ENCODE measurements at regions of chr15 and their contacts with region 1.

Region 1: DNA sequence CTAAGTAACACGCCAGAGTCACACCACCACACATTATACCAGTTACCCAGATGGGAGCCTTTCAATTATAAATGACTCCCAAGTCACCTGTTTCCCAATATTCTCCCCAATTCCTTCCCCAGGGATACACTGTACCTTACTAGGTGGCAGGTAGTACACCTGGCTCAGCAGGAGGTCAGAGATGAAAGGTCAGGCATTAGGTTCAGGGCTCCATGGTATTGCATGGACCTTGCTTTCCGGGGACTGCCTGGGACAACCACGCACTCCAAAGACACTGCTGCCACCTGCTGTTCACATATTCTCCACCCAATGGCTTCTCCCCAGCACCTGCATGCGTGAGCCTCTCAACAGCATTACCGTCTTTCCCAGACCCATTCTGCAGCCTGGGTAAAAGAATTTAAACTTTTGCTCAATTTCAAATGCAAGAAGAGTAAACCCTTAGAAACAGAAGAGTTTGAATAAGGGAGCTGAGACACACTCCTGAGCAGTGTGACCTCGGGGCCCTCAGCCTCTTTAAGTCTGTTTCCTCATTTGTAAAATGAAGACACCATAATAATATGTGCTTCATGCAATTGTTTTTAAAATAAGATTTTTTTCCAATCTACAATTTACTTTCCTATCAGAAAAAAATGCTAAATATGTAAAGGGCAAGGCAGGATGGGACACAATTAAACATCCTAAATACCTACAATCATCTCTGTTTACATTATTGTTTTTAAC is 28.0 kb upstream of the LACTB start:
- DNase-seq: peak; percentile 65 to 87
- H3K4me3 ChIP-seq: no peak overlapping the region
- H3K27ac ChIP-seq: no peak overlapping the region
- H3K4me1 ChIP-seq: peaks cover 4 to 9% (median 8%) of the 10 kb centered on the region in 4 experiments; a peak in 5 of 7 replicates
- H3K27me3 ChIP-seq: no peaks in the 10 kb centered on the region
- CTCF ChIP-seq: peak; percentile 87 to 95 (median 95)
- EP300 ChIP-seq: 0 out of 3 replicates have a peak, but pooled peaks of 1 of the 2 experiments have one; percentile 27
- POLR2A ChIP-seq: no peak
- RAD21 ChIP-seq: peak; percentile 98 to 99

Region 2: DNA sequence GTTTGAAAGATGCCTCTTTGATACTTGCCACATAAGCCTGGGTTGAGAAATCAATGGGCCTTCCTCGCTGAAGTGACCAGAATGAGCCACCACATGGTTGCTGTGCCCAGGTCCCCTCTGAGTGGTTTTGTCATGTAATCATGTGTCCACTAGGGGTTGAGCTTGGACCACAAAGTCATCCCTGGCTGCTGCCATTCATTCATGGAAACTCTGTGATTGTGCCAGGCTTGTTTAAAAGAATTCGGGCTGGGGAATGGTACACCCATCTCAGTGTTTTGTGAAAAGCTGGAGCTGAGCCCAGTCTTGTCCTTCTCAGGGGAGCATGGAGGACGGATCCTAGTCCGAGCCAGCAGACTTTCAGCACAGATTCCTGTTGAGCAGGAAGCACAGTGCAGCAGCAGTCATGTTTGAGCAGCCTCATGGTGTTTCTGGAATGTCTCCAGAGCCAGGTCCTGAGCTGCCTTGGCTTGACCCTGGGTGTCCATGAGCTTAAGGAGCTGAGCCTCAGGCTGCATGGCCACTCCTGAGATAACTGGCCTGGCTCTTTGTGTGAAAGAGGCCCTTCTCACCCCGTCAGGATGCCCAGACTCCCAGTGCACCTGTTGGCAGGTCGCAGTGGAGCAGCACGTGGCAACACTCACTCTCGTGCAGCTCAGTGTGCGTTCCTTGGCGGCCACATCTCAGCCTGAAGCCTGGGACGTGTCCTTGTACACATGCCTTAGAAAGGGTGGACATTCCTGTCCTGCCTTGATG is 311.4 kb before region 1 on chr15:
- CTCF ChIA-PET with region 1: interaction called, 11 read pairs
- POLR2A ChIA-PET with region 1: no interaction called
- DNase-seq: peak in 1 of 2 experiments; percentile 56
- H3K4me3 ChIP-seq: no peak overlapping the region
- H3K27ac ChIP-seq: no peak overlapping the region
- H3K4me1 ChIP-seq: peaks cover 0 to 7% (median 3%) of the 10 kb centered on the region in 4 experiments; a peak in 5 of 7 replicates
- H3K27me3 ChIP-seq: no peaks in the 10 kb centered on the region
- CTCF ChIP-seq: peak; percentile 61 to 80 (median 78)
- EP300 ChIP-seq: no peak
- POLR2A ChIP-seq: no peak
- RAD21 ChIP-seq: peak; percentile 95 to 96

Region 3: GRCh38 chr15:62847900-62848489 is 245.7 kb before region 1 on chr15:
- CTCF ChIA-PET with region 1: interaction called, 12 read pairs
- POLR2A ChIA-PET with region 1: interaction called, 3 read pairs
- DNase-seq: peak; percentile 60 to 87
- H3K4me3 ChIP-seq: no peak overlapping the region
- H3K27ac ChIP-seq: no peak overlapping the region
- H3K4me1 ChIP-seq: peaks cover 12 to 26% (median 22%) of the 10 kb centered on the region in 4 experiments
- H3K27me3 ChIP-seq: no peaks in the 10 kb centered on the region
- CTCF ChIP-seq: peak; percentile 64 to 81 (median 76)
- EP300 ChIP-seq: no peak
- POLR2A ChIP-seq: no peak
- RAD21 ChIP-seq: peak; percentile 85 to 92

Region 4: GRCh38 chr15:62950462-62950931 is 143.1 kb before region 1 on chr15:
- CTCF ChIA-PET with region 1: no interaction called
- POLR2A ChIA-PET with region 1: no interaction called
- DNase-seq: no peak
- H3K4me3 ChIP-seq: no peak overlapping the region
- H3K27ac ChIP-seq: no peak overlapping the region
- H3K4me1 ChIP-seq: no peaks in the 10 kb centered on the region
- H3K27me3 ChIP-seq: no peaks in the 10 kb centered on the region
- CTCF ChIP-seq: no peak
- EP300 ChIP-seq: no peak
- POLR2A ChIP-seq: no peak
- RAD21 ChIP-seq: no peak

Region 5: GRCh38 chr15:63056794-63057193 is 36.9 kb before region 1 on chr15:
- CTCF ChIA-PET with region 1: interaction called, 7 read pairs
- POLR2A ChIA-PET with region 1: interaction called, 325 read pairs
- DNase-seq: no peak
- H3K4me3 ChIP-seq: no peak overlapping the region
- H3K27ac ChIP-seq: no peak overlapping the region
- H3K4me1 ChIP-seq: peaks cover 0 to 6% (median 0%) of the 10 kb centered on the region in 4 experiments; a peak in 1 of 7 replicates
- H3K27me3 ChIP-seq: no peaks in the 10 kb centered on the region
- CTCF ChIP-seq: no peak
- EP300 ChIP-seq: no peak
- POLR2A ChIP-seq: no peak; a peak in 1 of 3 replicates
- RAD21 ChIP-seq: no peak

Region 6: DNA sequence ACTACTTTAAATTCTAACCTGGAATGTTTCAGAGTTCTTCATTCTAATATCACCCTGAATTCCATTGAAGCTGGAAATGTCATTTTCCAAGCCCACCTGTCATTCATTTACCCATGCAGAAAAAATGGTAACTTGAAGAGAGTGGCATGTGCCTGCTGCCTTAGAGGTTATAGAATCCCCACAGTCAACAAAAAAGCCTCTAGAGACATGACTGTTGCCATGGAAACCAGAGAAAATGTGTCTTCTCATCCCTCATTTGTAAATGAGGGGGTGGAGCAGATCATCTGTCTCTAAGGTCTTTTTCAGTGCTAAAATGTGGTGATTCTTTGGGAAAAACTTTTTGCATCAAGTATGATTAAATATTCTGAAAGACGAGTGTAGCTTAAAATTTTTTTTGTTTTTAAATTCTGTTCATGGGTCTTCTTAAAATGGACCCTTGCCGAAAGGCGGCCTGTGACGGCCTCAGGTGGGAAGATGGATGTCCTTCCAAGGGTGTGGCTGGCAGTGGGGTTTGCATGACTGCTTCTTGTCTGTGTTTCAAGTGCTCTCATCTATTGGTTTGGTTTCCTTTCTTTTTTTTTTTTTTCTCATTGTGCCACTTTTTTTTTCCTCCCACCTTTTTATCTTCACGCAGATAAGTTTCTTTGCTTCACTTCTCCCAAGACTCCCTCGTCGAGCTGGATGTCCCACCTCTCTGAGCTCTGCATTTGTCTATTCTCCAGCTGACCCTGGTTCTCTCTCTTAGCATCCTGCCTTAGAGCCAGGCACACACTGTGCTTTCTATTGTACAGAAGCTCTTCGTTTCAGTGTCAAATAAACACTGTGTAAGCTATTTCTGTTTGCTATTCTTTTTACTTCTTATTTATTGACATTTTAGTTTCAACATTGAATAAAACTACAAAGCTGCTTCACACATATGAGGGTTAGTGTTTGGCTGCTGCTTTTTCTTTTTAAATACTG is 28.1 kb before region 1 on chr15:
- CTCF ChIA-PET with region 1: interaction called, 12 read pairs
- POLR2A ChIA-PET with region 1: interaction called, 325 read pairs
- DNase-seq: no peak
- H3K4me3 ChIP-seq: no peak overlapping the region
- H3K27ac ChIP-seq: no peak overlapping the region
- H3K4me1 ChIP-seq: peaks cover 0 to 4% (median 0%) of the 10 kb centered on the region in 4 experiments; a peak in 1 of 7 replicates
- H3K27me3 ChIP-seq: no peaks in the 10 kb centered on the region
- CTCF ChIP-seq: no peak
- EP300 ChIP-seq: no peak
- POLR2A ChIP-seq: peak in 1 of 2 experiments; percentile 51; a peak in 1 of 3 replicates
- RAD21 ChIP-seq: no peak

Region 7: GRCh38 chr15:63073497-63074172 is 20.0 kb before region 1 on chr15:
- CTCF ChIA-PET with region 1: interaction called, 16 read pairs
- POLR2A ChIA-PET with region 1: interaction called, 325 read pairs
- DNase-seq: no peak
- H3K4me3 ChIP-seq: no peak overlapping the region
- H3K27ac ChIP-seq: no peak overlapping the region
- H3K4me1 ChIP-seq: peaks cover 15 to 27% (median 20%) of the 10 kb centered on the region in 4 experiments
- H3K27me3 ChIP-seq: no peaks in the 10 kb centered on the region
- CTCF ChIP-seq: no peak
- EP300 ChIP-seq: no peak
- POLR2A ChIP-seq: no peak
- RAD21 ChIP-seq: no peak

Region 8: GRCh38 chr15:63079938-63080626 is 13.6 kb before region 1 on chr15:
- CTCF ChIA-PET with region 1: interaction called, 22 read pairs
- POLR2A ChIA-PET with region 1: interaction called, 325 read pairs
- DNase-seq: no peak
- H3K4me3 ChIP-seq: no peak overlapping the region
- H3K27ac ChIP-seq: no peak overlapping the region
- H3K4me1 ChIP-seq: peaks cover 15 to 28% (median 19%) of the 10 kb centered on the region in 4 experiments
- H3K27me3 ChIP-seq: no peaks in the 10 kb centered on the region
- CTCF ChIP-seq: no peak
- EP300 ChIP-seq: no peak
- POLR2A ChIP-seq: no peak
- RAD21 ChIP-seq: no peak

Region 9: DNA sequence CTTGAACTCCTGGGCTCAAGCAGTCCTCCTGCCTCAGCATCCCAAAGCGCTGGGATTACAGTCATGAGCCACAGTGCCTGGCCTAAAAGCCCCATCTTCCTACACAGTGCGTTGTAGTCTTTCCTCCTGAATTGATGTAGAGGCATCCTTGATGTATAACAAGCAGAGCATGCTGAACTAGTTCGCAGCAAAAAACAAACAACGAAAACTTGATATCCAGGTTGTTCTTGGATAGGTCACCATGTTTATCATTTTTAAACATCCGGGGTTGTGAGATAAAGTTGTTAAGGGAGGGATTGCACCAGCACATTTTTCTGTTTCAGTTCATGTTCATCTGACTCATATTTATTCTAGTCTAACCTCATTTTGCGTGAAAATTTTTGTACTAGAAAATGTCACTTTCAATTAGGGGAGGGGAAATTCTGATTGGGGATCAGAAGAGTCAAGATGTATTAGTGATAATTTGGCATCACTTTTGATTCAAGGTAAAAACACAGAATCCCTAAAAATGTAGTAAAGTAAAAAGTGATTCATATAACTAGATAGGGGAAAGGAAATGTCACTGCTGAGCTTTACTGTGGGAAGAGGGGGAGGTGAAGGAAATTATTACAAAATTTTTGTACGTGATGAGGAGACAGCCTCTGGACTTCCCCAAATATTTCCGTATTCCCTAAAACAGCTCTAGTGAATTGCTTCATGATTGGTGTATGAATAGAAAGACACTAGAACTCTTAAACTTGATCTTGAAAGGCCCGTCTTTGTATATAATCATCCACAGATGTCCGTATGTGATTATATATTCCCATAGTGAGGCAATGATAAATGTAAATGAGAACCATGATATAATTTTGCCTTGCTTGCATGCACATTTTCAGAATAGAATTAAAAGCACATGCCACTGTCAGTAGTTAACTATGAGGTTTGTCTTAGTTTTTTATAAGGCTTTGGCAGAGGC is 118.7 kb after region 1 on chr15:
- CTCF ChIA-PET with region 1: no interaction called
- POLR2A ChIA-PET with region 1: no interaction called
- DNase-seq: no peak
- H3K4me3 ChIP-seq: no peak overlapping the region
- H3K27ac ChIP-seq: no peak overlapping the region
- H3K4me1 ChIP-seq: peaks cover 2 to 11% (median 4%) of the 10 kb centered on the region in 4 experiments; a peak in 6 of 7 replicates
- H3K27me3 ChIP-seq: no peaks in the 10 kb centered on the region
- CTCF ChIP-seq: no peak
- EP300 ChIP-seq: no peak
- POLR2A ChIP-seq: no peak
- RAD21 ChIP-seq: no peak